Endothelial cell of umbilical vein (primary cell): ENCODE measurements at regions of chr15 and their contacts with region 1.

Region 1: GRCh38 chr15:60727260-60727659 is 248.3 kb upstream of the ICE2 start:
- DNase-seq: no peak
- H3K4me3 ChIP-seq: no peak overlapping the region
- H3K27ac ChIP-seq: no peak overlapping the region
- H3K4me1 ChIP-seq: no peaks in the 10 kb centered on the region
- H3K27me3 ChIP-seq: peaks cover 0 to 1% of the 10 kb centered on the region in 2 experiments
- CTCF ChIP-seq: no peak
- POLR2A ChIP-seq: no peak

Region 2: GRCh38 chr15:60715859-60716258 is 11.4 kb before region 1 on chr15:
- CTCF ChIA-PET with region 1: no interaction called
- POLR2A ChIA-PET with region 1: no interaction called
- dilution Hi-C with region 1: no loop called
- intact Hi-C with region 1: loop called (anchors 1 kb)
- DNase-seq: no peak
- H3K4me3 ChIP-seq: no peak overlapping the region
- H3K27ac ChIP-seq: no peak overlapping the region
- H3K4me1 ChIP-seq: peaks cover 15% of the 10 kb centered on the region
- H3K27me3 ChIP-seq: no peaks in the 10 kb centered on the region
- CTCF ChIP-seq: no peak
- POLR2A ChIP-seq: no peak

Region 3: DNA sequence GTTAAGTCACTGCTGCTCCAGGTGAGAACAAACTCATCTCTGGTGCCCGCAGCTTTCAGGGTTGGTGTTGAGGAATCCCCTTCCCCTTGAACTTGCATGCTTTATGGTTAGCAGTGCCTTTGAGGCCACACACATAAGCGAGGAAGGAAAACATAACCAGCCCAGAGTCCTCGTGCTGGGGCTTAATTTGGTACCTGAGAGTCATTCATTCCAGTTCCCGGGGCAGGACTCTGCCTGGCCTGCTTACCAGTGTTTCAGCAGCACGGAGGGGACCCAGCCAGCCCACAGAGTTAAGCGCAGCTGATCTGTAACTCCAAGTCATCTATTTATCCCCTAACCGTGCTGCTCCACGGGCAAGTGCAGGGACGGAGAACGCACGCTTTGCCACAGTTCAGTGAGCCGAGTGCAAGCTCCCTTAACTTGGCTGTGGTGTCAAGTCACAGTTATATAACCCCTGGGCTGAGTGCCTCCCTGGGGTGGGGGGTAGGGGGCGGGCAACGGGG is 54.0 kb after region 1 on chr15:
- CTCF ChIA-PET with region 1: no interaction called
- POLR2A ChIA-PET with region 1: no interaction called
- dilution Hi-C with region 1: no loop called
- intact Hi-C with region 1: no loop called
- DNase-seq: no peak
- H3K4me3 ChIP-seq: no peak overlapping the region
- H3K27ac ChIP-seq: no peak overlapping the region
- H3K4me1 ChIP-seq: no peaks in the 10 kb centered on the region
- H3K27me3 ChIP-seq: no peaks in the 10 kb centered on the region
- CTCF ChIP-seq: no peak
- POLR2A ChIP-seq: no peak